Activated CD4-positive, alpha-beta memory T cell treated with anti-CD3 and anti-CD28 coated beads for 36 hours (primary cell): ENCODE measurements at regions of chr4 and their contacts with region 1.

Region 1: GRCh38 chr4:110516106-110516922 is 40.4 kb downstream of the ENPEP start:
- DNase-seq: peak; percentile 78
- H3K4me3 Mint-ChIP-seq: peak overlapping the region; percentile 91
- H3K27ac Mint-ChIP-seq: peak overlapping the region; percentile 74
- H3K4me1 Mint-ChIP-seq: peaks cover 12% of the 10 kb centered on the region
- H3K27me3 Mint-ChIP-seq: peaks cover 2% of the 10 kb centered on the region

Region 2: GRCh38 chr4:109998867-109999584 is 517.3 kb before region 1 on chr4:
- CTCF ChIA-PET with region 1: interaction called, 278 read pairs
- POLR2A ChIA-PET with region 1: no interaction called
- intact Hi-C with region 1: loop called (anchors 1 kb)
- DNase-seq: no peak
- H3K4me3 Mint-ChIP-seq: no peak overlapping the region
- H3K27ac Mint-ChIP-seq: no peak overlapping the region
- H3K4me1 Mint-ChIP-seq: peaks cover 12% of the 10 kb centered on the region
- H3K27me3 Mint-ChIP-seq: peaks cover 5% of the 10 kb centered on the region

Region 3: DNA sequence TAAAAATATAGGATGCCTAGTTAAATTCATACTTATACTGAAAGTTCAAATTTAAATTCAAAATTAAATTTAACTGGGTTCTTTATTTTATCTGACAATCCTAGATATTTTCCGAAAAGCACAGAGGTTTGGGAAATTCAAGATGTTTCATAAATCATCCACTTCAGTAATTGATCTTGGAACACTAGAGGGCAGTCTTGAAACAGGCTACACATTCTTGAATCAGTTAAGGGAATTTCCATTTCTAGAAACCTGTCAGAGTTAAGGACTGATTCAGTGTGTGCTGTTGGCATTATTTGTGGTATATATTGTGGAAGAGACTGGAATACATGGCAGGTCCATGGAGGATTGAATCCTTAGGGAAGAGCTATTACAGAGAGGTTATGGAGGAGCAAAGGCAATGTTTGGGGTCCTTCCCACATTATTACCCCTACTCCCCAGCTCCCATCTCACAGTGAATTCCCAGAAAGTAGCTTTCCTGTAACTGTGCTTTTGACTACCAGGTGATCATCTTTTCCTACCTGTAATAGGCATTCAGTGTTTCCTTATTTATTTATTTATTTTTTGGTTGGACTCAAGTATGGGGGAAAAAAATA is 510.8 kb before region 1 on chr4:
- CTCF ChIA-PET with region 1: interaction called, 278 read pairs
- POLR2A ChIA-PET with region 1: no interaction called
- intact Hi-C with region 1: loop called (anchors 1 kb)
- DNase-seq: no peak
- H3K4me3 Mint-ChIP-seq: no peak overlapping the region
- H3K27ac Mint-ChIP-seq: no peak overlapping the region
- H3K4me1 Mint-ChIP-seq: peaks cover 6% of the 10 kb centered on the region
- H3K27me3 Mint-ChIP-seq: no peaks in the 10 kb centered on the region

Region 4: DNA sequence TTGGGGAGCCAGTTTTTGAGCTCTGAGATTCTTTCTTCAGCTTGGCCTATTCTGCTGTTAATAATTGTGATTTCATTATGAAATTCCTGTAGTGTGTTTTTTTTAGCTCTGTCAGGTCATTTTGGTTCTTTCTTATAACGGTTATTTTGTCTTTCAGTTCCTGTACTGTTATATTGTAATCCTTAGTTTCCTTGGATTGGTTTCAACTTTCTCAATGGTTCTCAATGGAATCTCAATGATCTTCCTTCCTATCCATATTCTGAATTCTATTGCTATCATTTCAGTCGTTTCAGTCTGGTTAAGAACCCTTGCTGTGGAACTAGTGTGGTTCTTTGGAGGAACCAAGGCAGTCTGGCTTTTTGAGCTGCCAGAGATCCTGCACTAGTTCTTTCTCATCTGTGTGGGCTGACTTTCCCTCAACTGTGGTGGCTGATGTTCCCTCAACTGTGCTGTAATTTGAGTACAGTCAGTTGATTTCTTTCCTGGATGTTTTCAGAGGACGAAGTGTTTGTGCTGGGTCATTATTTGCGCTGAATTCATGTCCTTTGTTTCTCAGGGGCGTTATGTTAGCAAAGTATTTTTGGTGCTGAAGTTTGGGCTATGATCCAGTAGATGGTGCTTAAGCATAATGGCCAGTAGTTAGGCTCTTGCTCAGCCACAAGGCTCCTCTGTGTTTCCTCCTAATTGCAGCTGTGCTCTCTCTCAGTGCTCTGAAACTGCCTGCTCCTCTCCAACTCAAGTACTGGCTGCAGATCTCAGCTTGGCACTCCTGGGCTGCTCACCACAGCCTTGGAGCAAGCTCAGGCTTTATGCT is 12.8 kb before region 1 on chr4:
- CTCF ChIA-PET with region 1: interaction called, 10 read pairs
- POLR2A ChIA-PET with region 1: no interaction called
- intact Hi-C with region 1: no loop called
- DNase-seq: no peak
- H3K4me3 Mint-ChIP-seq: no peak overlapping the region
- H3K27ac Mint-ChIP-seq: no peak overlapping the region
- H3K4me1 Mint-ChIP-seq: no peaks in the 10 kb centered on the region
- H3K27me3 Mint-ChIP-seq: peaks cover 6% of the 10 kb centered on the region

Region 5: GRCh38 chr4:110527156-110527555 is 10.8 kb after region 1 on chr4:
- CTCF ChIA-PET with region 1: interaction called, 12 read pairs
- POLR2A ChIA-PET with region 1: no interaction called
- intact Hi-C with region 1: loop called (anchors 1 kb)
- DNase-seq: peak; percentile 69
- H3K4me3 Mint-ChIP-seq: no peak overlapping the region
- H3K27ac Mint-ChIP-seq: no peak overlapping the region
- H3K4me1 Mint-ChIP-seq: peaks cover 16% of the 10 kb centered on the region
- H3K27me3 Mint-ChIP-seq: peaks cover 2% of the 10 kb centered on the region